Activated CD4-positive, alpha-beta T cell treated with anti-CD3 and anti-CD28 coated beads for 36 hours (primary cell): ENCODE measurements at regions of chr16 and their contacts with region 1.

Region 1: DNA sequence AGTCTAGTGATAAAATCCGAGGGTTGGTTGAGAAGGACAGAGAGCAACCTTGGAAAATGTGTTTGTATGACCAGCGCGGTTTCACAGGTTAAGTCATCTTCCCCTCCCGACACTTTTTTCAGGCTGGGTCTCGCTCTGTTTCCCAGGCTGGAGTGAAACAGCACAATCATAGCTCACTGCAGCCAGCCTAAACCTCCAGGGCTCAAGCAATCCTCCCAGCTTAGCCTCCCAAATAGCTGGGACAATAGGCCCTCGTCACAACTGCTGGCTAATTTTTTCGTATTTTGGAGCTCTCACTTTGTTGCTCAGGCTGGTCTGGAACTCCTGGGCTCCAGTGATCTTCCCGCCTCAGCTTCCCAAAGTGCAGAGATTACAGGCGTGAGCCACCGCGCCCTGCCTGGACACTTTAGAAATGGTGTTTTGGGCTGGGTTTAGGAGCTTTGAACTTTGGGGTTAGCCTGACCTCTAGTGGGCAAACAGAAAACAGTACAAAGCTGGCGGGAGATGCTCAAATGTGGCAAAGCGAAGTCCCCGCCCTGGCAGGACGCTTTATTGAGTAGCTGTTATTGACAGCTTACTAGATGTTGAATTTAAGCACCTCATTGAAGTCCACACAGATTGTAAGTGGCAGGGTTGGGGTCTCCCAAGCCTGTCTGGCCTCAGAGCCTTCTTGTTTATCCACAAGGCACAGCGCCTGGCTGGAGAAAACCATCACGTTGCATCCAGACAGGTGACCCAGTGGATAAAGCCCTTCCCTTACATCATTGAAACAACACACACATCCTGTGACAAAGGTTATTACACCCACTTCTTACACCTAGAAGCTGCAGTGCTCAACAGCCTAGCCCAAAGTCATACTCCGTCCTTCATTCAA is 34.7 kb upstream of the RBBP6 start:
- DNase-seq: peak; percentile 72
- ATAC-seq: peak; percentile 96
- H3K4me3 Mint-ChIP-seq: no peak overlapping the region
- H3K27ac Mint-ChIP-seq: no peak overlapping the region
- H3K4me1 Mint-ChIP-seq: no peaks in the 10 kb centered on the region
- H3K27me3 Mint-ChIP-seq: peaks cover 14% of the 10 kb centered on the region

Region 2: DNA sequence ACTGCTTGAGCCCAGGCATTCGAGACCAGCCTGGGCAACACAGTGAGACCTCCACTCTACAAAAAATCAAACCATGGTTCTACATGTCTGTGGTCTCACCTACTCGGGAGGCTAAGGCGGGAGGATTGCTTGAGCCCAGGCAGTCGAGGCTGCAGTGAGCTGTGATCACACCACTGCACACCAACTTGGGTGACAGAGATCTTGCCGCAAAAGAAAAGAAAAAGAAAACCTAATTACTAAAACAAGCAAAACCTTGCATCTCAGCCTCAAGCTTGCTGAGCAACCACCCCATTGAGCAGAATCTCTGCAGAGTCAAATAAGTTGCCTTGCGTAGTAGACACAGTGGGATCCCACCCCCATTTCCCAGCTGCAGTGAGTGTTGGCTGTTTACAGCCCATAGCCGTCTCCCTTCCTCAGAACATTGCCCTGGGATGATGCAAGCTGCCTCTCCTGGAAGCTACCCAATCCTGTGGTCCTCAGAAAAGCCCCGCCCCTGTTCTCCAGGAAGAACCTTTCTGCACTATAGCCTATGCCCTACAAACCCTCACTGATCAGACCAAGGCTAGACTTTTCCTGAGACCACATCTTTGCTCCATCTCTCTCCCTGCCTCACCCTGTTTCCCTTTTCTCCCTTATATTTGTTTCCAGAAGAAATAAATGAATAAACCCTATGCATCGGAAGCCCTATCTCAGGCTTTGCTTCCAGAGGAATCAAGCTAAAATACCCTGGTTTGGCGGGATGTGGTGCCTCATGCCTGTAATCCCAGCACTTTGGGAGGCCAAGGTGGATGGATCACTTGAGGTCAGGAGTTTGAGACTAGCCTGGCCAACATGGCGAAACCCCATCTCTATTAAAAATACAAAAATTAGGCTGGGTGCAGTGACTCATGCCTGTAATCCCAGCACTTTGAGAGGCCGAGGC is 774.9 kb before region 1 on chr16:
- CTCF ChIA-PET with region 1: interaction called, 3 read pairs
- POLR2A ChIA-PET with region 1: no interaction called
- intact Hi-C with region 1: loop called in 1 of 2 experiments (anchors 2 kb)
- DNase-seq: no peak
- ATAC-seq: no peak
- H3K4me3 Mint-ChIP-seq: no peak overlapping the region
- H3K27ac Mint-ChIP-seq: no peak overlapping the region
- H3K4me1 Mint-ChIP-seq: peaks cover 8% of the 10 kb centered on the region
- H3K27me3 Mint-ChIP-seq: peaks cover 11% of the 10 kb centered on the region

Region 3: DNA sequence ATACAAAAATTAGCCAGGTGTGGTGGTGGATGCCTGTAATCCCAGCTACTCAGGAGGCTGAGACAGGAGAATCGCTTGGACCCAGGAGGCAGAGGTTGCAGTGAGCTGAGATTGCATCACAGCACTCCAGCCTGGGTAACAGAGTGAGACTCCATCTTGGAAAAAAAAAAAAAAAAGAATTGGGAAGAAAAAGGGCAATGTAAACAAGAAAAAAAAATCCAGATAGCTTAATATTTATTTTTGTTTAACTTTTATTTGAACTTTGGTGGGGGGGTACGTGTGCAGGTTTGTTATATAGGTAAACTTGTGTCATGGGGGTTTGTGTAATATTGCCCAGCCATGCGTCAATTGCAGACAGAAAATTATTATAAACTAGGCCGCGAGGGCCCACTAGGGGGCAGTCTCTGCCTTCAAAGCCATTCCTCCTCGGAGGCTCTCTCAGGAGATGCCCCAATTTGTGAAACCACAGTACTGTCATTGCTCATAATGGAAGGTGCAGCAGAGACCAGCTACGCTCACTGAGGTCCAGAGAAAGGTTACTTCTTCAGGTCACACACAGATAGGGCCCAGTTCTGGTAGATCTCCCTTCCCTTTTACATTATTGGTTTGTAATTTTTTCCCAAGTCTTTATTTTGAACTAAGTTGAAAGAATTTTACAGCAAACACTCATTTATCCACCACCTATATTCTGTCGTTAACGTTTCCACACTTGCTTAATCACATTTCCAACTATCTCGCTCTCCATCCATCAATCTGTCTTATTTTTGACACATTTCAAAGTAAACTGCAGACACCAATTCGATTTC is 462.7 kb before region 1 on chr16:
- CTCF ChIA-PET with region 1: interaction called, 29 read pairs
- POLR2A ChIA-PET with region 1: interaction called, 3 read pairs
- intact Hi-C with region 1: loop called (anchors 1 kb)
- DNase-seq: peak; percentile 90
- ATAC-seq: peak; percentile 93
- H3K4me3 Mint-ChIP-seq: no peak overlapping the region
- H3K27ac Mint-ChIP-seq: no peak overlapping the region
- H3K4me1 Mint-ChIP-seq: peaks cover 5% of the 10 kb centered on the region
- H3K27me3 Mint-ChIP-seq: no peaks in the 10 kb centered on the region

Region 4: GRCh38 chr16:24070851-24071250 is 433.9 kb before region 1 on chr16:
- CTCF ChIA-PET with region 1: interaction called, 26 read pairs
- POLR2A ChIA-PET with region 1: no interaction called
- intact Hi-C with region 1: loop called in 1 of 2 experiments (anchors 1 kb)
- DNase-seq: peak; percentile 63
- ATAC-seq: peak; percentile 97
- H3K4me3 Mint-ChIP-seq: no peak overlapping the region
- H3K27ac Mint-ChIP-seq: no peak overlapping the region
- H3K4me1 Mint-ChIP-seq: peaks cover 28% of the 10 kb centered on the region
- H3K27me3 Mint-ChIP-seq: no peaks in the 10 kb centered on the region

Region 5: DNA sequence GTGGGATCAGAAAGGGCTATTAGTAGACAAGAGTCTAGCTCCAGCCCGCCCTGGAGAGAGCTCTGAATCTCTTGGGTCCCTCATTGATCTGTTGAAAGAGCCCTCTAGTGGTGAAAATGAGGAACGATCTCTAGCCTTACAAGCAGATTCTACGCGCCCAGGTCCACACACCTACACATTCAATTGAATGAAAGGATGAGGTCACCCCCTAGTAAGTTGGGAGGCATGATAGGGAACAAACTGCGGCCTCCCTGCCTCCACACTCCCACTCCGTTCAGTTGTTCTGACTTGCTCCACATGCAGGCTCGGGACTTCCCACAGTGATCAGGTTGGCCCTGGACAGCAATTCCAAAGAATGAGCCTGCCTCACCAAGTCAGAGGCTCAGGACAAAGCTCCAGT is 251.5 kb before region 1 on chr16:
- CTCF ChIA-PET with region 1: interaction called, 16 read pairs
- POLR2A ChIA-PET with region 1: no interaction called
- intact Hi-C with region 1: loop called (anchors 1 to 10 kb)
- DNase-seq: peak; percentile 63
- ATAC-seq: peak; percentile 79
- H3K4me3 Mint-ChIP-seq: no peak overlapping the region
- H3K27ac Mint-ChIP-seq: no peak overlapping the region
- H3K4me1 Mint-ChIP-seq: no peaks in the 10 kb centered on the region
- H3K27me3 Mint-ChIP-seq: peaks cover 45% of the 10 kb centered on the region

Region 6: GRCh38 chr16:24360936-24361335 is 143.8 kb before region 1 on chr16:
- CTCF ChIA-PET with region 1: no interaction called
- POLR2A ChIA-PET with region 1: no interaction called
- intact Hi-C with region 1: no loop called
- DNase-seq: no peak
- ATAC-seq: no peak
- H3K4me3 Mint-ChIP-seq: no peak overlapping the region
- H3K27ac Mint-ChIP-seq: no peak overlapping the region
- H3K4me1 Mint-ChIP-seq: no peaks in the 10 kb centered on the region
- H3K27me3 Mint-ChIP-seq: peaks cover 14% of the 10 kb centered on the region

Region 7: DNA sequence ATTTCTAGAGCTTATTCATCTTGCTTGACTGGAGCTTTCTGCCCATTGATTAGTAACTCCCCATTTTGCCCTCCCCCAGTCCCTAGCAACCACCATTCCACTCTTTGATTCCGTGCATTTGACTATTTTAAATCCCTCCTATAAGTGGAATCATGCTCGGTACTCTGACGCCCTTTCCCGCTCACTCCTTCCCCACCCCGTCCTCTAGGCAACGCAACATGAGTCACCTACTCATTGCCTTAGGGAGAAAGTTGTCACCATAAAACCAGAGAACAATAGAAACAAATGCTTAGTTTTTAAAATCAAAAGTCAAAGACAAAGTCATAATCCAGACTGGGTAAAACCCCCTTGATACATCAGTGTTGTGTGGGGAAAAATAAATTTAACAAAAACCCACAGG is 10.8 kb before region 1 on chr16:
- CTCF ChIA-PET with region 1: interaction called, 11 read pairs
- POLR2A ChIA-PET with region 1: no interaction called
- intact Hi-C with region 1: no loop called
- DNase-seq: no peak
- ATAC-seq: no peak
- H3K4me3 Mint-ChIP-seq: no peak overlapping the region
- H3K27ac Mint-ChIP-seq: no peak overlapping the region
- H3K4me1 Mint-ChIP-seq: no peaks in the 10 kb centered on the region
- H3K27me3 Mint-ChIP-seq: peaks cover 7% of the 10 kb centered on the region

Region 8: GRCh38 chr16:24516900-24517669 is 12.4 kb after region 1 on chr16:
- CTCF ChIA-PET with region 1: interaction called, 17 read pairs
- POLR2A ChIA-PET with region 1: no interaction called
- intact Hi-C with region 1: no loop called
- DNase-seq: peak; percentile 86
- ATAC-seq: peak; percentile 78
- H3K4me3 Mint-ChIP-seq: peak overlapping the region; percentile 26
- H3K27ac Mint-ChIP-seq: no peak overlapping the region
- H3K4me1 Mint-ChIP-seq: peaks cover 4% of the 10 kb centered on the region
- H3K27me3 Mint-ChIP-seq: no peaks in the 10 kb centered on the region

Region 9: DNA sequence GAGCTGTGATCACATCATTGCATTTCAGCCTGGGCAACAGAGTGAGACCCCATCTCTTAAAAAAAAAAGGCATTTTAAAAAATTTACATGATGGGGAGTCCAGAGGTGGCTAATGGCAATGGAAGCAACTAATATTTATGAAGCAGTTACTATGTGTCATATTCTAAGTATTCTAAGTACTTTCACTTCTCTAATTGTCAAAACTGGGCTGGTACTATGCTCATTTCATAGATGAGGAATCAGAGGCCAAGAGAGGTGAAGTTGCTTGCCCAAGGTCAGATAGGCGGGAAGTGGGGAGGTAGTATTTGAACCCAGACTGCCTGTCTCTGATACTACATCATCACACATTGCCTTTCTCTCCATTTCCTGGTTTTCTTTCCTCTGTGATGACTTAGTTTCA is 391.7 kb after region 1 on chr16:
- CTCF ChIA-PET with region 1: no interaction called
- POLR2A ChIA-PET with region 1: no interaction called
- intact Hi-C with region 1: no loop called
- DNase-seq: no peak
- ATAC-seq: no peak
- H3K4me3 Mint-ChIP-seq: no peak overlapping the region
- H3K27ac Mint-ChIP-seq: no peak overlapping the region
- H3K4me1 Mint-ChIP-seq: no peaks in the 10 kb centered on the region
- H3K27me3 Mint-ChIP-seq: peaks cover 7% of the 10 kb centered on the region